ENCODE measurements at regions of chr1 and their contacts with region 1.

Region 1: GRCh38 chr1:42756956-42757891 is 9.6 kb downstream of the P3H1 start:
- DNase-seq: no peak
- ATAC-seq: peak; percentile 88
- H3K4me3 ChIP-seq: no peak overlapping the region
- H3K27ac ChIP-seq: peak overlapping the region; percentile 48
- H3K4me1 ChIP-seq: no peaks in the 10 kb centered on the region
- H3K27me3 ChIP-seq: no peaks in the 10 kb centered on the region
- CTCF ChIP-seq: peak; percentile 88

Region 2: DNA sequence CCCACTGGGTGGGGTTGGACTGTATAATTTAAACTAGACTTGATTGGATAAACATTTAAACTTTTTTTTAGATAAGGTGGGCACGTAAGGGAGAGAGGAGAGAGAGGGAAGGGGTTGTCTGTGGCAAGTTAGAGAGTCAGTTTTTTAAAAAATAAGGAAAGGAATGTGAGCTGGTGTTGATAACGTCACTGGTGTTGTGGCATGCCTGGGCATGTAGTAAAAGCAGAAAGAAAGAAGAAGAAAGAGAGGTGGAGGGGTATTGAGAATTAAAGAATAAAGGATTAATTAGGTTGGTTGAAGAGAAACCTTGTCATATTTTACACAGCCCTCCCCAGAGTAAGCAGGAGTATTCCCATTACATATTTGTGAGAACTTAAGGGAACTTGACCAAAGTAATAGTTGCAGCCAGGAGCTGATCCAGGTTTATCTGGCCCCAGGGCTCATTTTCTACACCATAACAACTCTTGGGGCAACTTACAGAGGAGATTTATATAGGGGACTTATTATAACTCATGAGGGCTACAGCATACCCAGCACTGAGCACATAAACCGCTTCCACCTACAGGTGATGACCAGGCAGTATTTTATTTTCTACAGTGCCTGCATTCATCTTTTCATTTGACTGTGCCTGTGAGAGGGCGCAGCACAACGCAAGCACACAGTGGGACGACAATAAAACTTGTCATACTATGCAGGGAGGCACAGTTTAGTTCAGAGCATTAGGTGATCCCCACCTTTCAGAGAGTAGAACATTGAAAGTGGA is 223.9 kb before region 1 on chr1:
- CTCF ChIA-PET with region 1: no interaction called
- POLR2A ChIA-PET with region 1: interaction called, 16 read pairs
- in situ Hi-C with region 1: no loop called
- intact Hi-C with region 1: no loop called
- DNase-seq: no peak
- ATAC-seq: no peak
- H3K4me3 ChIP-seq: no peak overlapping the region
- H3K27ac ChIP-seq: no peak overlapping the region
- H3K4me1 ChIP-seq: no peaks in the 10 kb centered on the region
- H3K27me3 ChIP-seq: no peaks in the 10 kb centered on the region
- CTCF ChIP-seq: no peak

Region 3: DNA sequence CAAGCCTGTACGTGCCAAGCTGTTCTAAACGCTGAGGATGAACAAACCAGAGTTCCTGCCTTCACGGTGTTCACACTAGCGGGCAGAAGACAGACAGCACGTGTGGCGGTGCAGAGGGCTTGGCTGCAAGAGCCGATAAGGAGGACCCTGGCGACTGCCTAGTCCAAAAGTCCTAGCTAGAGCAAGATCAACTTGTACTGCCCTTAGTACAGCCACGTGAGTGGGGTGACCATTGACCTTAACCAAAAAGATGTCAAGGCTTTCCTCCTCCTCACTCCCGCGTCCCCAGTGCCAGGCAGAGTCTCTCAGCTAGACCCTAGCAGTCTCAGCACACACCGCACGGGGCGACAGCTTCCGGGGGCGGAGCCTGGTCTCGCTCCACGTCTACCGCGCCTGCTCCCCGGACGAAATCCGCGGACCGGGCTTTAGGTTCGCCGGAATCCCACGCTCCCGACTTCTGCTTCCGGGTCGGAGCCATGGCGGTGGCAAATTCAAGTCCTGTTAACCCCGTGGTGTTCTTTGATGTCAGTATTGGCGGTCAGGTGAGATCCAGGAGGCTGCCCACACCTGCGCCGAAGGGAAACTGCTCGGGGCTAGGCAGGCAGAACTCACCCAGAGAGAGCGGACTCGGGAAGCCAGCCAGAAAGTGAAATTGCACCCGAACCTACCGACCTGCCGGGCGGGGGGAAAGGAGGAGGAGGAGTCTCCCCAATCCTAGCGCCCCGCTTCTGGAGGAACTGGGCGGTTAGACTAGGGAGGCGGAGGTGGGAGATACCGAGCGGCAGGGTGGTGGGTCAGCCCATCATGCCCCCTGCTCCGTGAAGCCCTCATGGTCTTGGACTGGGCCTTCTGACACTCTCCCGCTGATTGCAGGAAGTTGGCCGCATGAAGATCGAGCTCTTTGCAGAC is 99.0 kb before region 1 on chr1 and contains the start of gene PPIH:
- CTCF ChIA-PET with region 1: no interaction called
- POLR2A ChIA-PET with region 1: no interaction called
- in situ Hi-C with region 1: no loop called
- intact Hi-C with region 1: no loop called
- DNase-seq: peak; percentile 84
- ATAC-seq: peak; percentile 100
- H3K4me3 ChIP-seq: peak within 1 kb of the TSS; percentile 86 to 98
- H3K27ac ChIP-seq: peak within 1 kb of the TSS; percentile 96
- H3K4me1 ChIP-seq: peaks cover 15% of the 10 kb centered on the region
- H3K27me3 ChIP-seq: peaks cover 3% of the 10 kb centered on the region; the same call in 1 of the 2 replicates
- CTCF ChIP-seq: no peak
- total RNA-seq, gene PPIH: 78.5 TPM

Measured in Panc1 (cell line).